ENCODE measurements at regions of chrX and their contacts with region 1.

Region 1: DNA sequence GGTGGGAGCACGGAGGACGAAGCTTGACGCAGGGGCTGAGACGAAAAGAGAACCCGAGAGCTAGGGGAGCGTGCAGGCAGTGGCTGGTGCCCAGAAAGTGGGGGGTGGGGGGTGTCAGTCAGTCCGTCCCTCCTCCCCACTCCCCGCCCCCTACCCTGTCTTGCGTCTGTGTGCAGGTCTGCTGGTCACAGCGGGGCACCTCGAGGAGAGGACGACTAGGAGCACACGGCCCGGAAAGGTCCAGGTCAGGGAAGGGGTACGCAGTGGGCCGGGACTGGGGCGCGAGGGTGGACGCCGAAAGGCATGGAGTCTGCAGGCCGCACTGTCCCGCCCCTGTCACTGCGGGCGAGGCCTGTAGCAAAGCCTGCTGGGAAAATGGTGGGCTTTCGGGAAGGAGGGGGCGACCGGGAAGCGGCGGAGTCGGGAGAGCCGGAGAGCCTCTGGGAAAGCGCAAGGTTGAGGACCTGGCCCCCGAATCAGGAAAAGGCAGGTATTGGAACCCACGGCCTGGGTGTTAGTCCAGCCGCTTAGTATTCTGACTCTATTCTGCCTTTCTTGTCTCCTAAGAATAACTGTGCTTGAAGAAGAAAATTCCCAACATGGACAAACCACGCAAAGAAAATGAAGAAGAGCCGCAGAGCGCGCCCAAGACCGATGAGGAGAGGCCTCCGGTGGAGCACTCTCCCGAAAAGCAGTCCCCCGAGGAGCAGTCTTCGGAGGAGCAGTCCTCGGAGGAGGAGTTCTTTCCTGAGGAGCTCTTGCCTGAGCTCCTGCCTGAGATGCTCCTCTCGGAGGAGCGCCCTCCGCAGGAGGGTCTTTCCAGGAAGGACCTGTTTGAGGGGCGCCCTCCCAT is 769 bp downstream of the TCEAL1 start:
- DNase-seq: peak; percentile 31 to 86
- ATAC-seq: peak; percentile 92 to 95
- H3K4me3 ChIP-seq: peak overlapping the region; percentile 83
- H3K27ac ChIP-seq: peak overlapping the region; percentile 97
- H3K4me1 ChIP-seq: peaks cover 16% of the 10 kb centered on the region; the same call in 2 of the 3 replicates
- CTCF ChIP-seq: peak; percentile 85
- EP300 ChIP-seq: no peak
- POLR2A ChIP-seq: peak; percentile 68
- RAD21 ChIP-seq: peak; percentile 58 to 61

Region 2: GRCh38 chrX:103220511-103221323 is 408.8 kb before region 1 on chrX:
- CTCF ChIA-PET with region 1: no interaction called
- POLR2A ChIA-PET with region 1: no interaction called
- DNase-seq: no peak
- ATAC-seq: no peak
- H3K4me3 ChIP-seq: no peak overlapping the region
- H3K27ac ChIP-seq: no peak overlapping the region
- H3K4me1 ChIP-seq: no peaks in the 10 kb centered on the region
- CTCF ChIP-seq: no peak
- EP300 ChIP-seq: no peak
- POLR2A ChIP-seq: no peak
- RAD21 ChIP-seq: no peak

Region 3: GRCh38 chrX:103585411-103586313 is 43.9 kb before region 1 on chrX and contains the start of gene TCEAL4:
- CTCF ChIA-PET with region 1: interaction called, 10 read pairs
- POLR2A ChIA-PET with region 1: interaction called, 7 read pairs
- DNase-seq: peak; percentile 51 to 54
- ATAC-seq: peak; percentile 97
- H3K4me3 ChIP-seq: peak within 1 kb of the TSS; percentile 93
- H3K27ac ChIP-seq: peak within 1 kb of the TSS; percentile 89 to 99
- H3K4me1 ChIP-seq: peaks cover 7% of the 10 kb centered on the region; the same call in 2 of the 3 replicates
- CTCF ChIP-seq: no peak
- EP300 ChIP-seq: no peak
- POLR2A ChIP-seq: peak; percentile 50
- RAD21 ChIP-seq: no peak
- polyA plus RNA-seq, gene TCEAL4: 35.2 and 57.2 TPM in 2 replicates

Region 4: DNA sequence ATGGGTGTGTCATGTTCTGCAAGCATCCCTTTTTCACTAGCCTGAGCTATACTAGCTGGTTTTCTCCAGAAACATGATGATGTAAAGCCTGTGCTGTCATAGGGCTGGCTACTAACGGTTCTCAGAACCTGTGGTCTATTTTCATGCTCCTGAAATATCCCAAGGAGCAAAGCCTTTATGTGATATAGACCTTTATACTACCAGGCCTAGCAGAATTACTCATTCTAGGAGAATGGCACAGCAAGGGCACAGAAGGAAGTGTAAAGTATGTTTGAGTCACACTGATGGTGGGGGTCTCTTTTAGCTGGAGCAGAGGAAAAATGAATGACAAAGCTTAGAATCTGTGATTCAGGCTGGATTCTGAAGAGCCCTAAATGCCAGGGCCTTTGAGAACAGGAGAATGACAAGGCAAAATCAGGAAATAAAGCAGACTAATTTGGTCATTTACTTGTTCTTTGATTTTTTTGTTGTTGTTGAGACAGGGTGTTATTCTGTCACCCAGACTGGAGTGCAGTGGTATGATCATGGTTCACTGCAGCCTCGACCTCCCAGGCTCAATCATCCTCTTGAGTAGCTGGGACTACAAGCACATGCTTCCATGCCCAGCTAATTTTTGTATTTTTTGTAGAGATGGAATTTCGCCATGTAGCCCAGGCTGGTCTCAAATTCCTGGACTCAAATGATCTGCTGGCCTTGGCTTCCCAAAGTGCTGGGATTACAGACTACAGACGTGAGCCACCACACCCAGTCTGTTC is 11.0 kb after region 1 on chrX:
- CTCF ChIA-PET with region 1: interaction called, 26 read pairs
- POLR2A ChIA-PET with region 1: interaction called, 10 read pairs
- DNase-seq: peak in 1 of 2 experiments; percentile 32
- ATAC-seq: peak; percentile 51 to 54
- H3K4me3 ChIP-seq: no peak overlapping the region
- H3K27ac ChIP-seq: peak overlapping the region; percentile 73 to 77
- H3K4me1 ChIP-seq: peaks cover 51% of the 10 kb centered on the region
- CTCF ChIP-seq: no peak
- EP300 ChIP-seq: no peak
- POLR2A ChIP-seq: no peak
- RAD21 ChIP-seq: no peak

Region 5: GRCh38 chrX:103656632-103657031 is 27.1 kb after region 1 on chrX:
- CTCF ChIA-PET with region 1: interaction called, 25 read pairs
- POLR2A ChIA-PET with region 1: interaction called, 17 read pairs
- DNase-seq: peak; percentile 66 to 88
- ATAC-seq: peak; percentile 94 to 99
- H3K4me3 ChIP-seq: no peak overlapping the region
- H3K27ac ChIP-seq: peak overlapping the region; percentile 76 to 85
- H3K4me1 ChIP-seq: peaks cover 41% of the 10 kb centered on the region
- CTCF ChIP-seq: no peak
- EP300 ChIP-seq: peak in 1 of 2 experiments; percentile 39; a peak in 1 of 5 replicates
- POLR2A ChIP-seq: no peak
- RAD21 ChIP-seq: no peak

Region 6: DNA sequence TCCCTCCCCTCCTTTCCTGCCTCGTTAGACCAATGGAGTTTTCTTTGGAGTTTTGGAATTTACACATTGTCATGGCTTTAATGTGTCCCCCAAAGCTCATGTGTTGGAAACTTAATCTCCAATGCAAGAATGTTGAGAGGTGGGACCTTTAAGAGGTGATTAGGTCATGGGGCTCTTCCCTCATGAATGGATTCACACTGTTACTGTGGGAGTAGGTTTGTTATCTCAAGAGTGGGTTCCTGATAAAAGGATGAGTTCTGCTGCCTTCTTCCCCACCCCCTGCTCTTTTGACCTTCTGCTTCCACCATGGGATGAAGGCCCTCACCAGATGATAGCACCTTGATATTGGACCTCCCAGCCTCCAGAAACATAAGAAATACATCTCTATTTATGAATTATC is 40.2 kb after region 1 on chrX:
- CTCF ChIA-PET with region 1: interaction called, 21 read pairs
- POLR2A ChIA-PET with region 1: interaction called, 4 read pairs
- DNase-seq: no peak
- ATAC-seq: no peak
- H3K4me3 ChIP-seq: no peak overlapping the region
- H3K27ac ChIP-seq: no peak overlapping the region
- H3K4me1 ChIP-seq: no peaks in the 10 kb centered on the region
- CTCF ChIP-seq: no peak
- EP300 ChIP-seq: no peak
- POLR2A ChIP-seq: no peak
- RAD21 ChIP-seq: no peak

Region 7: GRCh38 chrX:103800318-103800717 is 170.8 kb after region 1 on chrX:
- CTCF ChIA-PET with region 1: no interaction called
- POLR2A ChIA-PET with region 1: no interaction called
- DNase-seq: no peak
- ATAC-seq: no peak
- H3K4me3 ChIP-seq: no peak overlapping the region
- H3K27ac ChIP-seq: no peak overlapping the region
- H3K4me1 ChIP-seq: no peaks in the 10 kb centered on the region
- CTCF ChIP-seq: no peak
- EP300 ChIP-seq: no peak
- POLR2A ChIP-seq: no peak
- RAD21 ChIP-seq: no peak